ENCODE measurements at regions of chr2 and their contacts with region 1.

Region 1: DNA sequence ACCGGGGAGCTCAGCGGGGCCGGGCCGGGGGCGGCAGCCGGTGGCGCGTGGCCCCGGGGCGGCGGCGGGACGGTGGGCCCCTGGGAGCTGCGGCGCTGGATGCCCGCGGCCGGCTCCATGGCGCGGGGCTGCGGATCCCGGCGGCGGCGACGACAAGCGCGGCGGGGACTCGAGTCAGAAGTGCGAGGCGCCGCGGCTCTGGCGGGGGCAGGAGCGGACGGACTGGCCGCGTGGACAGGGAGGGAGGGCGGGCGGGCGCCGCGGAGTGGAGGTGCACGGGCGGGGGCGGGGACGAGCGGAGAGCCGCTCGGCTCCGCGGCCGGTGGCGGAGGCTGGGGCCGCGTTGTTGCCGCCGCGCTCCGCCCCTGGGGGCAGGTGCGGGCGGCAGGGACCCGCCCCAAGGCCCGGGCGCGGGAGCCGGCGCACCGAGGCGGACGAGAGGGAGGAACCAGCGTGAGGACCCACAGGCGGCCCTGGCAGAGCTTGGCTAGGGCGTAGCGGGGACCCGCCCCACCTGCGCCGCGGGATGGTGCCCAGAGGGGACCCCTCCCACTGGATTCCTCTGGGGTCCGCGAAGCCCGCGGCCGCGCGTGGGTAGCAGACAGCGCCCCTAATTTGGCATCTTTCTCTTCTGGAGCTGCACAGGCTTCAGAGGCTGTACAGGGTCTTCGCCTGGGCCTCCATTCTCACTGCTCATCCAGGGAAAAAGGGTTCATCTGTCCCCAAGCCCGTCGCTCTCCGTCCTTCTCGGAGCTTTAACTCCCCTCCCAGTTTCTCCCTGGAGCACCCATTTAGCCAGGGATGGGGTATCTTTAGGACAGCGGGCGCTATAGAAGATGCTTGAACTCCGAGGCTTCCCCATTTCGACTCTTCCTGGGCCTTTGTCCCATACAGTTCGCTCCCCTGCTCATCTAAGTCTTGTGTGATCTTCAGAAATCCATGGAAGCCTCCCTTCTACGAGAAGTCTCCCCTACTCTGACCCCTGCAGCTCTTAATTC is at the start of gene TMEM163:
- DNase-seq: no peak
- H3K4me3 Mint-ChIP-seq: peak within 1 kb of the TSS; percentile 81
- H3K27ac Mint-ChIP-seq: no peak within 1 kb of the TSS
- H3K4me1 Mint-ChIP-seq: peaks cover 11% of the 10 kb centered on the region
- H3K27me3 Mint-ChIP-seq: peaks cover 66% of the 10 kb centered on the region
- total RNA-seq, gene TMEM163: 0.12 and 0.21 TPM in 2 replicates

Region 2: DNA sequence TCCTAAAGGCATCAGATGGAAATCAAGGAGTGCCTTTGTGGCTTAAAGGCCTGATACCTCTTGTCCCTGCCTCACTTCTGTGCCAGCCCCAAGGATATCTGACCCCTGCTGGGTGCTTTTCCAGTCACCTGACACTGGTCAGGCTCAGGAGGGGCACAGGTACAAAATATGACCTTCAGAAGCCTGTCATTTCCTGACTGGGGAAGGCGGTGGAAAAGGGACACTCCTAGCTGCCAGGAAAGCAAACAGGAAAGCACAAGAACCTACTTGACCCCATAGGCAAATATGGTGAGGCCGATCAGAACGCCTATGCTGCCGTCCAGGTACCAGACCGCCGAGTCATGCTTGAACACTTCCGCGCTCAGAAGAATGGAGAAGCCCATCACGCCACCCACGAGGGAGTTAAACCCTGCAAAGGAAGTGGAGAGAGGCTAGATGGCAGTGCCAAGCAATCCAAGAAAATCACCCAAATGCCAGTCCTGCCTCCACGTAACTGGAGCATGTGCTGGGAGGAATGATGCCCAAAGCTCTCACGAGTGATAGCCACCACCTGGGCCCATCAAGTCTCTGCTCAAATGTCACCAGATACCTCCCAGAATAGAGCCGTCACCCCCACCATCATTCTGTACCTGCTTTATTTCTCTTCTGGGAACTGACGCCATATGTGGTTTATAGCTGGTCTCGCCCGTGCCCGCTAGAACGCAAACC is 261.2 kb before region 1 on chr2:
- intact Hi-C with region 1: loop called (anchors 10 kb)
- DNase-seq: no peak
- H3K4me3 Mint-ChIP-seq: no peak overlapping the region
- H3K27ac Mint-ChIP-seq: no peak overlapping the region
- H3K4me1 Mint-ChIP-seq: no peaks in the 10 kb centered on the region
- H3K27me3 Mint-ChIP-seq: no peaks in the 10 kb centered on the region

Region 3: DNA sequence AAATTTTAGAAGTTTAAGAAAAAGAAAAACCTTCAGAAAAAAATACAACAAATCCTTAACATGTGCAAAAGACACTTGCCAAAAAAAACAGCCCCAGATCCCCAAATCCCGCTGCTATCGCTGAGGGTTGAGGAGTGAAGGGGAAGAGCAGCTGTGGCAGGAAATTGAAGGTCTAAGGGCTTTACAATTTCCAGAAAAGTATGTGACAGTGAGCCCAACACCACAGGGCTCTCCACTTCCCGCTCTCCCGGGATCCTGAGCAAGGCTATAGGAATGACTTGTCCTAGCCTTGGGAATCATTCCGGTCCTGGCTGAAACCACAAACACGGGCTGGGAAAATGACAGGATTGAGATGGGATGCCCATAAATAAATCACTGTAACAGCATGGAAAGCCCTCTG is 191.7 kb before region 1 on chr2:
- intact Hi-C with region 1: no loop called
- DNase-seq: no peak
- H3K4me3 Mint-ChIP-seq: no peak overlapping the region
- H3K27ac Mint-ChIP-seq: no peak overlapping the region
- H3K4me1 Mint-ChIP-seq: no peaks in the 10 kb centered on the region
- H3K27me3 Mint-ChIP-seq: peaks cover 6% of the 10 kb centered on the region

Region 4: DNA sequence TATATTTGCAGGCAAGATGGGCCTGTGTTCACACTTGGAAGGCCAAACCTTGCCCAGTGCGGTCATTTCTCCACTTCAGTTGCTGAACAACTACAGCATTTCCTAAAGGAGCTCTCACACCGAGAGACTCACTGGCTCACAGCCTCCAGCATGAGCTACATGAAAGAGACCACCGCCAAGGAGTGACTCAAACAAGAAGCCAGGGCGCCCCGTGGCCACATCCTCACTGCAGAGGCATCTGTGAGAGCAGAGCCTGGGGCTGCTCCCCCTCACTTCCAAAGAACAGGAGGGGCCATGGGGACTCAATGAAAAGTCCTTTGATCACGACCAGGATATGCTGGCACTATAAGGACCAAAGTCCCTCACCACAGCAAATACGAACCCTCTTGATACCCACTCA is 50.3 kb before region 1 on chr2:
- intact Hi-C with region 1: loop called (anchors 2 kb)
- DNase-seq: peak; percentile 74
- H3K4me3 Mint-ChIP-seq: peak overlapping the region; percentile 37
- H3K27ac Mint-ChIP-seq: peak overlapping the region; percentile 47
- H3K4me1 Mint-ChIP-seq: peaks cover 59% of the 10 kb centered on the region
- H3K27me3 Mint-ChIP-seq: peaks cover 34% of the 10 kb centered on the region

Region 5: GRCh38 chr2:134683561-134684112 is 35.5 kb before region 1 on chr2:
- intact Hi-C with region 1: loop called (anchors 1 kb)
- DNase-seq: no peak
- H3K4me3 Mint-ChIP-seq: no peak overlapping the region
- H3K27ac Mint-ChIP-seq: no peak overlapping the region
- H3K4me1 Mint-ChIP-seq: peaks cover 53% of the 10 kb centered on the region
- H3K27me3 Mint-ChIP-seq: peaks cover 12% of the 10 kb centered on the region